Cardiac septum (tissue), 1 donor: ENCODE measurements at regions of chr18 and their contacts with region 1.

Region 1: DNA sequence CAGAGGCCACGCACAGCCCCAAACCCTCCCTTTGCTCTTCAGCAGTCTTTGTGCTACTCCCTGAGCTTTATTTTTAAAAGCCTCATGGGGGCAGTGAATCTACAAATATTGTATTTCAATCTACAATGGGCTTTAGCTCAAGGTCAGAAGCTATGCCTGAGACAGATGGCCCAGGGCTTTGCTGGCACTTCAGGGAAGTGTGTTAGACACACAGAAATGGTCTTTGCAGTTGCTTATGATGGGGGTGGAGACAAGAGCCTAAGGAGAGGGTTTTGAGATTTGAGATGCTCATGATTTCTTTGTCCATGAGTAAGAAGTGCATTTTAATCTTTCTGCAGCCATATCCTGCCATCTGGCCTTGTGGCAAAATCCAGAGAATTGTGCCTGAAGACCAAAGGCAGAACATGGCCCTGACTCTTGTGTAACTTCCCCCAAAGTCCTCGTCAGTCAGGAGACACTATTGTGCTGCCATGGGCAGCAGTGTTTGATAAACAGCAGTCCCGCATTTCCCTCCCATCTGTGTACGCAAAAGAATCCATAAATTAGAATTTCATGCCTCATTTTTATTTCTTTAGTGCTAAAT is 92.6 kb downstream of the VAPA start:
- DNase-seq: no peak

Region 2: GRCh38 chr18:9971313-9971920 is 35.0 kb before region 1 on chr18:
- intact Hi-C with region 1: loop called (anchors 1 kb)
- DNase-seq: no peak

Region 3: DNA sequence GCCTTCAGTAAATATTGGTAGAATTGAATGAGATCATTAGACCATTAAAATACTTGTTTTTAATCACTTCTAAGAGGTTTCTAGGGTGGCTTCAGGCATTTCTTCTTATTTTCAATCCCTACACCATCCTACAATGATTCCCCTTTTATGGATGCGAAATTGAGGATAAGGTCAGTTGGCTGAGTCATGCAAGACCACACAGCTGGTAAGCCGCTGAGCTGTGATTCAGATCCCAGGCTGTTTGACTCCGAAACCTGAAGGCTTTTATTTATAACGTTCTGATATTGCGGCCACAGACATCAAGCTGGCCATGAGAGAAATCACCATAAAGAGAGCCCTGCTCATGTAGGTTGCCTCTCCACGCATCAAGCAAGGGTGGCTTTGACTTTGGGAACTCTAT is 40.8 kb after region 1 on chr18:
- intact Hi-C with region 1: no loop called
- DNase-seq: no peak

Region 4: DNA sequence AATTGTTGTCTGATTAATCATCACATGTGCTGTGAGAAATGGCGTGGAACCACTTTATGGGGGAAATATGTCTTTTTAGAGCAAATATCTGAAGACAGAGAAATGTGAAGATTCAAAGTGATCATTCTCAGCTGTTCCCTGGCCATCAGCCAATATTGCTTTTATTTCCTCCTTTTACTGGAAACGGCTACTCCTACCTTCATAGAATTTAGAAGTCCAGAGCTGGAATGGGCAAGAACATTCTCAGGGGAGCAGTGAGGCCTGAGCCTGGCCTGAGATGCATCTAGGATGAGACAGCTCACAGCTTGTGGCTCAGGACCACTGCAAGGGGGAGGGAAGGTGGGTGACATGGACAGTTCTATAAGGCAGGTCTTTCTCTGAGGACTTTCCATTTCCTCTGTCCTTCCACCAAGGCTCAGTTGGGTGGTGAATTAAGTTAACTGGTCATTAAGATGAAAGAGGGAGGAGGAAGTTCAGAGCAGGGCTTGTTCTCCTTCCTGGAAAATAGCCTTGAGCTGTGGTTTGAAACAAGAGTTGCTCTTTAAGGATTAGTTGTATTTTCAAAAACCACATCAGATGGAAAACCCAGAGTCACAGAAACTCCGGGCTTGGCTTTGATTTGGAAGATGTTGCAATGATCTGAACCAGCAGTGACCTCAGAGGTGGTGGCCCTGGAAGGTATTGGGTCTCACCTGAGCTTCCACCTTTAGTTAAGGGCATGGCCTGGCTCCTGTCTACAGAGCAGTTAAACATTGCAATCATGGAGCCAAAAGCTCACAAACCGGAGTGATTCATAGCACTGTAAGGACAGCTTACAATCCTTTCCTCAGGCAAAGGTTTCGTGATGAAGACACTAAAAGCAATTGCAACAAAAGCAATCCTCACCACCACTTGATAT is 51.7 kb after region 1 on chr18:
- intact Hi-C with region 1: loop called (anchors 5 kb)
- DNase-seq: no peak

Region 5: DNA sequence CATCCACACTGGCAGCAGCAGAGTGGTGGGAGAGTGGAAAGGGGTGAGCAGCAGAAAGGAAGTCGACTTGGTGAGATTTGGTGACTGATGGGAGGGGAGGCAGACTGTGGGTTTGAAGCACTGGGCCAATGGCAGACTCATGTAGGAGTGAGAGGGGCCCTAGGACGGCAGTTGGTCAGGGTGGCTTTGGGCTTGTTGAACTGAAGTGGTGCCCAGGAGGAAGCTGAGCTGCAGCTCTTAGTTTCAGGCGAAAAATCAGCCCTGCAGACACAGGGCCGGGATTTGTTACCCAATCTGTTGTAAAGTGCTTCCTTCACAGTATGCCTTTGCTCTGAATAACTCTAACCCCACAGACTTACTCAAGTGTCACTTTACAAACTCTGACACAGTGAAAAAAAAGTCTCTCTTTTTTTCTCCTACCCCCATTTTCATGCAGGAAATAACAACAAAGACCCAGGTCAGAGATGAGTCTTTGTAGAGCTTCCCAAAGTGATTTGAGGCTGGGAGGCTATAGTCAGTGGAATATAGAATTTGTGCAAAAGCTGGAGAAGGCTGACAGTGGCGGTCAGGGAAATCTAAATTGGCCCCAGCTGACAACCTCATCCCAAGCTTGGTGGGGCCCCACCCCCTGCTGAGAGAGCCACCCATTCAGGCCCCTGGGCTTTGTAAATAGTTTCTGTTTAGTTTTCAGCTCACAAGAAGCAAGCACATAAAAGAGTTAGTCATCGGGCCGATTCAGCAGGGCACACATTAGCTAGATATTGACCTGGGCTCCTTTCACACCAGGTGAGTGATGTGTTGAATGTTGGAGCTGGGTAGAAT is 134.3 kb after region 1 on chr18:
- intact Hi-C with region 1: loop called (anchors 5 kb)
- DNase-seq: no peak

Region 6: GRCh38 chr18:10205151-10205550 is 198.7 kb after region 1 on chr18:
- intact Hi-C with region 1: no loop called
- DNase-seq: no peak

Region 7: GRCh38 chr18:10353791-10354190 is 347.4 kb after region 1 on chr18:
- intact Hi-C with region 1: loop called (anchors 2 kb)
- DNase-seq: no peak